SK-N-SH (cell line): ENCODE measurements at regions of chr12 and their contacts with region 1.

Region 1: DNA sequence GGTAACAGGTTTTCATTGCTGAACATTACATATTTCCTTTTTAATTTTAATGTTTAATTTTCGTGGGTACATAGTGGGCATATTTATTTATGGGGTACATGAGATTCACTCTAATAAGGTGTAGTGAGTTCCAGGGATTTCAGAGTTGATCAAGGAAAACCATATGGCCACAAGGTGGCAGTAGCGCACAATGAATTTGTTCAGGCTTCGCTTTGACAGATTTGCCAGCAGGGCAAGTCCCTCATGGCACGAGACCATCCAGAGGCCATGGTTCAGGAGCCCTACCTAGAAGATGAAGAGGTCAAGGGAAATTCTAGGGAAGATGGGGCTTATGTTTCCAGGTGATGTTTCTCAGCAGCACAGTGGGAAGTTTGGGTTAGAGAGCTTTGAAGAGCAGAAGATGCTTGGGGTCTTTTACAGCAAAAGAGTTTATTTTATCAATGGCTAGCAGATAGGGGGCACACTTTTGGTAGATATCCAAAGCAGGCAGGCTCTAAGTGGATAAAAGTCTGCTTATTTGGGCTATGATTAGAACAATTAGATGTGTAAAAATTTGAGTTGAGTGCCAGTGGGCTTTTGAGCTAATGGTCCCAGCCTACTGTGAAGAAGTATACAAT is 1004.4 kb downstream of the AACS start:
- DNase-seq: peak; percentile 20
- H3K4me3 ChIP-seq: no peak overlapping the region
- H3K27ac ChIP-seq: no peak overlapping the region
- H3K4me1 ChIP-seq: no peaks in the 10 kb centered on the region
- H3K27me3 ChIP-seq: no peaks in the 10 kb centered on the region
- CTCF ChIP-seq: peak; percentile 71
- EP300 ChIP-seq: no peak
- RAD21 ChIP-seq: peak; percentile 79

Region 2: DNA sequence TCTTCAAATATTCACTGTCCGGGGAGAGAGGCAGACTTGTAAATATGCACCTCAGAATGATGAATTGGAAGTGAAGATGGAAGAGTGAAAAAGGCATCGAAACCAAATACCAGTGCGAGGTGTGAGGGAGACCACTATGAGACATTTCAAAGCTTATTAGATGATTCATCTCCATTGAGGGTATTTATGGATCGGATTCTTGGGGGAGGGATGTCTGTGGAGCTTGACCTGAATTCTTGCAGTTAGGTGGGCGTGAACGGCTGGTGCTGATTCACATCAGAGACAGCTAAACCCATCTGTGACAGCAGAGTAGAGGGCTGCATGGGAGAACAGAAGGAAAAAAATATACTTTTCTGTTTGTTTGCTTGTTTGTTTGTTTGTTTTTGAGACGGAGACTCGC is 327.2 kb before region 1 on chr12:
- CTCF ChIA-PET with region 1: no interaction called
- POLR2A ChIA-PET with region 1: no interaction called
- DNase-seq: no peak
- H3K4me3 ChIP-seq: no peak overlapping the region
- H3K27ac ChIP-seq: no peak overlapping the region
- H3K4me1 ChIP-seq: no peaks in the 10 kb centered on the region
- H3K27me3 ChIP-seq: no peaks in the 10 kb centered on the region
- CTCF ChIP-seq: no peak
- EP300 ChIP-seq: no peak
- RAD21 ChIP-seq: no peak

Region 3: GRCh38 chr12:126084480-126084879 is 14.8 kb after region 1 on chr12:
- CTCF ChIA-PET with region 1: interaction called, 16 read pairs
- POLR2A ChIA-PET with region 1: no interaction called
- DNase-seq: no peak
- H3K4me3 ChIP-seq: no peak overlapping the region
- H3K27ac ChIP-seq: no peak overlapping the region
- H3K4me1 ChIP-seq: no peaks in the 10 kb centered on the region
- H3K27me3 ChIP-seq: no peaks in the 10 kb centered on the region
- CTCF ChIP-seq: no peak
- EP300 ChIP-seq: no peak
- RAD21 ChIP-seq: no peak

Region 4: DNA sequence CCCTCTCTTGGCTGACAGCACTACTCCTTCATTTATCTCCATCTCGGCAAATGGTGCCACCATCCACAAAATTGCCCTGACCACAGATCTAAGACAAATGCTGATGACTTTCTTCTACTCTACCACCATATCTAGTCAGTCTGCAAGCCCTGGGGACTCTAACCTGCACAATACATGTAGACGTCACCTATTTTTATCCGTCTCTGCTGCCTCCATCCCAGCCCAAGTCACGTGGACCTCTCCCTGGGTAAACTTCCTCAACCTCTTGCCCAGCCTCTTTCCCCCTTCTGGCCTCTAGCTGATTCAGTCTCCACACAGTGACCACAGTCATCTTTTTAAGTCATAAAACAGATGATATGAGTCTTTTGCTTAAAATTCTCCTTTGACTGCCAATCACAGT is 198.6 kb after region 1 on chr12:
- CTCF ChIA-PET with region 1: no interaction called
- POLR2A ChIA-PET with region 1: no interaction called
- DNase-seq: no peak
- H3K4me3 ChIP-seq: no peak overlapping the region
- H3K27ac ChIP-seq: no peak overlapping the region
- H3K4me1 ChIP-seq: no peaks in the 10 kb centered on the region
- H3K27me3 ChIP-seq: no peaks in the 10 kb centered on the region
- CTCF ChIP-seq: no peak
- EP300 ChIP-seq: no peak
- RAD21 ChIP-seq: no peak

Region 5: GRCh38 chr12:126389220-126389841 is 319.7 kb after region 1 on chr12:
- CTCF ChIA-PET with region 1: no interaction called
- POLR2A ChIA-PET with region 1: no interaction called
- DNase-seq: no peak
- H3K4me3 ChIP-seq: no peak overlapping the region
- H3K27ac ChIP-seq: 0 out of 4 replicates have a peak overlapping the region, but pooled peaks of 1 of the 2 experiments have one; percentile 3
- H3K4me1 ChIP-seq: peaks cover 0 to 12% of the 10 kb centered on the region in 2 experiments; a peak in 1 of 4 replicates
- H3K27me3 ChIP-seq: no peaks in the 10 kb centered on the region
- CTCF ChIP-seq: no peak
- EP300 ChIP-seq: peak in 1 of 2 experiments; percentile 64; a peak in 1 of 4 replicates
- RAD21 ChIP-seq: no peak

Region 6: GRCh38 chr12:126617312-126617711 is 547.7 kb after region 1 on chr12:
- CTCF ChIA-PET with region 1: interaction called, 27 read pairs
- POLR2A ChIA-PET with region 1: no interaction called
- DNase-seq: peak; percentile 51
- H3K4me3 ChIP-seq: no peak overlapping the region
- H3K27ac ChIP-seq: no peak overlapping the region
- H3K4me1 ChIP-seq: no peaks in the 10 kb centered on the region
- H3K27me3 ChIP-seq: no peaks in the 10 kb centered on the region
- CTCF ChIP-seq: peak; percentile 61
- EP300 ChIP-seq: no peak
- RAD21 ChIP-seq: peak; percentile 83

Region 7: DNA sequence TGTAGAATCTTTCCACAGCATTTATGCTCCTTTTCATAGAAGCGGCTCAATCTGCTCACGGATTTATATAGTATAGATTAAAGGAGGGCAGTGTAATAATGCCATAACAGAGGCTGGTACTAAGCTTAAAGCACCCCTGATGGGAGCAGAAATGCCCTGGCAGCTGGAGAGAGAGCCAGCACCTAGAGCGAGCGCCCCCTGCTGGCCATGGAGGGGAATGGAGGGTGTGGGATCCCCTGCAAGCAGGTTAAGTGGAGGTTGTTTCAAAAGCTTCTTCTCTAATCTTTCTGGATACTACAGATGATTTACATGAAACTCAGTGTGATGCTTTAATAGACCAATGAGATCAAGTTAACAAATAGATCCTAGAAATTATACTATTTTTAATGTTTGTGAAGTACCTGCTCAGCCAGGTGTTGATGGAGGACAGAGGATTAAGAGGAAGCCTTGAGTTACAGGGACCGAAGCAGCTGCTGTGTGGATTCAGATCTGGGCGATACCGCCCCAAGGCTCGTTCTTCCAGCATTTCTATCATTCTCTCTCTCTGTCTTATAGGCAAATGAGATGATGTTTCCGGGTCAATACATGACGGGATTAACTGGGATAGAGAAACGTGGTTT is 678.0 kb after region 1 on chr12:
- CTCF ChIA-PET with region 1: interaction called, 10 read pairs
- POLR2A ChIA-PET with region 1: no interaction called
- DNase-seq: peak; percentile 69
- H3K4me3 ChIP-seq: no peak overlapping the region
- H3K27ac ChIP-seq: no peak overlapping the region
- H3K4me1 ChIP-seq: no peaks in the 10 kb centered on the region
- H3K27me3 ChIP-seq: no peaks in the 10 kb centered on the region
- CTCF ChIP-seq: peak; percentile 83
- EP300 ChIP-seq: no peak
- RAD21 ChIP-seq: peak; percentile 61